Activated naive CD4-positive, alpha-beta T cell treated with anti-CD3 and anti-CD28 coated beads for 36 hours (primary cell): ENCODE measurements at regions of chr4 and their contacts with region 1.

Region 1: GRCh38 chr4:99816545-99817308 is at the start of gene DAPP1:
- DNase-seq: peak; percentile 87
- H3K4me3 Mint-ChIP-seq: peak within 1 kb of the TSS; percentile 76
- H3K27ac Mint-ChIP-seq: peak within 1 kb of the TSS; percentile 94
- H3K4me1 Mint-ChIP-seq: peaks cover 71% of the 10 kb centered on the region
- H3K27me3 Mint-ChIP-seq: no peaks in the 10 kb centered on the region
- total RNA-seq, gene DAPP1: 24.4 to 25.8 TPM

Region 2: DNA sequence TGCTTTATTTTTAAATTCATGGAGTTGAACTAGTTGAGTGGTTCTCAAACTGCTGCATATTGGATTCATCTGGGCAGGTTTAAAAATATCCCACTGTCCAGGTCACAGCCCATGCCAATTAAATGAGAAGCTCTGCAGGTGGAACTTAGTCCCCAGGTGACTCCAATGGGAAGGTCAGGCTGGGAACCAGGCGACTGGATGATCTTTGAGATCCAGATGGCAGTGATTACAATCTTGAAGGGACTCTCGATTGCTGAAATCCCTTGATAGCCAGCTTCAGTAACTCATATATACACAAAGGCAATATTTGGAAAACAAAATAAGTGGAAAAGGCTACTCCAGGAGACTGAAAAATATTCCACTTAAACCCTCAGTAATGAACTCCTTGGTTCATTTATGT is 534.0 kb before region 1 on chr4:
- CTCF ChIA-PET with region 1: no interaction called
- intact Hi-C with region 1: no loop called
- DNase-seq: no peak
- H3K4me3 Mint-ChIP-seq: no peak overlapping the region
- H3K27ac Mint-ChIP-seq: no peak overlapping the region
- H3K4me1 Mint-ChIP-seq: no peaks in the 10 kb centered on the region
- H3K27me3 Mint-ChIP-seq: peaks cover 5% of the 10 kb centered on the region

Region 3: GRCh38 chr4:99827454-99827853 is 10.7 kb after region 1 on chr4:
- CTCF ChIA-PET with region 1: interaction called, 10 read pairs
- intact Hi-C with region 1: loop called (anchors 1 kb)
- DNase-seq: no peak
- H3K4me3 Mint-ChIP-seq: no peak overlapping the region
- H3K27ac Mint-ChIP-seq: peak overlapping the region; percentile 51
- H3K4me1 Mint-ChIP-seq: peaks cover 57% of the 10 kb centered on the region
- H3K27me3 Mint-ChIP-seq: no peaks in the 10 kb centered on the region

Region 4: DNA sequence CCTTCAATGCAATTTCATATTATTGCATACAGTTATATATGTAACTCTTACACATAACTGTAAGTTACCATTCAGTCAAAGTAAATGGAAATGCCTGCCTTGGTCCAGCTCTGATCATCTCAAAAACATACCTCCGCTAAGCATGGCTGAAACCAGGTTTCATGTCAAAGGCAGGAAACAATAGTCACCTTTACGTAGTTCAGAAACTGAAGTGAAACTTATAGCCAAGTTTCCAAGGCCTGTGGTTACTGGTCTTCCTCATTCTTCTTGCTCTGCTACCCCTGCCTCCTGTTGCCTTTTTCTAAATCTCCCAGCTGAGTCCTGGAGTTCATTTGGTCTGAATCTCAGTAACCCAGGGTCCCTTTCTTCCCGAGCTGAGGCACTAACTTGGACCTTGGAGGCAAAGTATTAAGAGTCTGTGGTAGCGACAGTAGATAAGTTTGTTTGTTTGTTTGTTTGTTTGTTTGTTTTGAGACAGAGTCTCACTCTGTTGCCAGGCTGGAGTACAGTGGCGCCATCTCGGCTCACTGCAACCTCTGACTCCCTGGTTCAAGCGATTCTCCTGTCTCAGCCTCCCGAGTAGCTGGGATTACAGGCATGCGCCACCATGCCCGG is 30.7 kb after region 1 on chr4:
- CTCF ChIA-PET with region 1: interaction called, 15 read pairs
- intact Hi-C with region 1: loop called (anchors 1 kb)
- DNase-seq: peak; percentile 61
- H3K4me3 Mint-ChIP-seq: peak overlapping the region; percentile 36
- H3K27ac Mint-ChIP-seq: peak overlapping the region; percentile 90
- H3K4me1 Mint-ChIP-seq: peaks cover 76% of the 10 kb centered on the region
- H3K27me3 Mint-ChIP-seq: no peaks in the 10 kb centered on the region

Region 5: GRCh38 chr4:99894161-99894997 is 77.7 kb after region 1 on chr4 and contains the start of gene LAMTOR3:
- CTCF ChIA-PET with region 1: interaction called, 5 read pairs
- intact Hi-C with region 1: loop called (anchors 2 kb)
- DNase-seq: peak; percentile 92
- H3K4me3 Mint-ChIP-seq: peak within 1 kb of the TSS; percentile 95
- H3K27ac Mint-ChIP-seq: peak within 1 kb of the TSS; percentile 92
- H3K4me1 Mint-ChIP-seq: peaks cover 32% of the 10 kb centered on the region
- H3K27me3 Mint-ChIP-seq: no peaks in the 10 kb centered on the region
- total RNA-seq, gene LAMTOR3: 24.9 to 26.9 TPM

Region 6: DNA sequence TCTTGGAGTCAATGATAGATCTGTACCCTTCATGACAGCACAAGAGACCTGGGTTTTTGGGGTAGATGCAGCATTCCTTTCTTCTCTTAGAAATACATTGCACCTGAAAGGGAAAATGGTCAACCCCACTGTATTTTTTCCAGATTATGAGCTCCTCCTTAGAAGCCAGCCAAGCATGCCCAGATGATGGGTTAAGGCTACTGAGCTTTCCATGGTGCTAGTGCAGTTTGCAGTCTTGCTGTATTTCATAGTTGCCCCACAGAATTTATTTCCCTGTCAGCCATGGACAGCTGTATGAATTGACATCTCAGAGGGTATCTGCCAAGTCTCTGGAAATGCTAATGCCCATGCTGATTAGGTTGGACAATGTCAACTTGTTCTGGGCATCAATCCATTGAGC is 207.1 kb after region 1 on chr4:
- CTCF ChIA-PET with region 1: no interaction called
- intact Hi-C with region 1: no loop called
- DNase-seq: no peak
- H3K4me3 Mint-ChIP-seq: no peak overlapping the region
- H3K27ac Mint-ChIP-seq: no peak overlapping the region
- H3K4me1 Mint-ChIP-seq: no peaks in the 10 kb centered on the region
- H3K27me3 Mint-ChIP-seq: peaks cover 5% of the 10 kb centered on the region

Region 7: GRCh38 chr4:100063355-100063754 is 246.6 kb after region 1 on chr4:
- CTCF ChIA-PET with region 1: no interaction called
- intact Hi-C with region 1: loop called (anchors 1 kb)
- DNase-seq: no peak
- H3K4me3 Mint-ChIP-seq: no peak overlapping the region
- H3K27ac Mint-ChIP-seq: no peak overlapping the region
- H3K4me1 Mint-ChIP-seq: no peaks in the 10 kb centered on the region
- H3K27me3 Mint-ChIP-seq: peaks cover 20% of the 10 kb centered on the region